Lower leg skin (tissue), 4 donors: ENCODE measurements at regions of chr17 and their contacts with region 1.

Region 1: GRCh38 chr17:17641621-17642409 is 39.4 kb upstream of the RAI1 start:
- DNase-seq: peak; percentile 71 to 95
- H3K4me3 ChIP-seq: no peak overlapping the region
- CTCF ChIP-seq: peak in 1 of 3 donors; percentile 78
- POLR2A ChIP-seq: no peak

Region 2: GRCh38 chr17:17356149-17356930 is 285.5 kb before region 1 on chr17:
- intact Hi-C with region 1: loop called (anchors 5 kb)
- DNase-seq: peak; percentile 80 to 96
- H3K4me3 ChIP-seq: no peak overlapping the region
- CTCF ChIP-seq: peak in 2 of 3 donors; percentile 84 to 100
- POLR2A ChIP-seq: no peak